Breast epithelium (tissue), 4 donors: ENCODE measurements at regions of chr18 and their contacts with region 1.

Region 1: GRCh38 chr18:61076986-61077385 is 256.2 kb upstream of the CDH20 start:
- DNase-seq: no peak
- H3K4me3 ChIP-seq: no peak overlapping the region
- H3K27ac ChIP-seq: no peak overlapping the region
- H3K4me1 ChIP-seq: no peaks in the 10 kb centered on the region
- H3K27me3 ChIP-seq: no peaks in the 10 kb centered on the region
- CTCF ChIP-seq: no peak
- POLR2A ChIP-seq: no peak

Region 2: DNA sequence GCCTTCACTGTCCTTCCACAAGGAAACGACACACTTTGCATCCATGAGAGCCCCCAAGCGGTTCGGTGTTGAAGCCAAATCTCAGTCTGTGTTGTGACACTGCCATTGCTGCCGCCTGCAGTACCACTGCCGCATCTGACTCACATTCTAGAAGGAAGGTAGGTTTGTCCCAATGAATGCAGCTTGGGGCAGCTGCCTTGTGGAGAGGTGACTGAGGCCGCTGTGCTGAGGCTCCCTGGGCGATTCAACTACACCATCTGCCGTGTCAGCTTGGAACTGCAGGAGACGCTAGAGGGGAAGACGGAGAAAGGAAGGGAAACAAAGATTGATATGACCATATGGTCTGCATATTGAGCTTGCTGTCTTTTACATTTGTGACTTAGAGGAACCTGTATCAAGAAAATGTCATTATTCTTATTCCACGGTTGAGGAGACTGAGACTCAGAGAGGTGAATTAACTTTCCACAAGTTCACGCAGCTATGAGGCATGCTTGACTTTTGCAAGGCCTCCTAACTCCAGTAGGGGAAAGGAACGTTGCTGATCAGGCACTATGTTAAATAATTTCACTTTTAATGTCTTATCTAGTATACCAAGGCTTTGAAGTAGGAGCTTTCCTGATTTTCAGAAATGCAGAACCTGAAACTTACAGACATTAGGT is 1674.4 kb before region 1 on chr18:
- intact Hi-C with region 1: no loop called
- DNase-seq: peak; percentile 59 to 69
- H3K4me3 ChIP-seq: no peak overlapping the region
- H3K27ac ChIP-seq: no peak overlapping the region
- H3K4me1 ChIP-seq: no peaks in the 10 kb centered on the region
- H3K27me3 ChIP-seq: no peaks in the 10 kb centered on the region
- CTCF ChIP-seq: peak in 2 of 3 donors; percentile 82 to 85
- POLR2A ChIP-seq: no peak

Region 3: GRCh38 chr18:61093965-61094364 is 17.0 kb after region 1 on chr18:
- intact Hi-C with region 1: no loop called
- DNase-seq: no peak
- H3K4me3 ChIP-seq: no peak overlapping the region
- H3K27ac ChIP-seq: no peak overlapping the region
- H3K4me1 ChIP-seq: no peaks in the 10 kb centered on the region
- H3K27me3 ChIP-seq: peaks cover 0 to 5% of the 10 kb centered on the region in 2 donors
- CTCF ChIP-seq: no peak
- POLR2A ChIP-seq: no peak

Region 4: DNA sequence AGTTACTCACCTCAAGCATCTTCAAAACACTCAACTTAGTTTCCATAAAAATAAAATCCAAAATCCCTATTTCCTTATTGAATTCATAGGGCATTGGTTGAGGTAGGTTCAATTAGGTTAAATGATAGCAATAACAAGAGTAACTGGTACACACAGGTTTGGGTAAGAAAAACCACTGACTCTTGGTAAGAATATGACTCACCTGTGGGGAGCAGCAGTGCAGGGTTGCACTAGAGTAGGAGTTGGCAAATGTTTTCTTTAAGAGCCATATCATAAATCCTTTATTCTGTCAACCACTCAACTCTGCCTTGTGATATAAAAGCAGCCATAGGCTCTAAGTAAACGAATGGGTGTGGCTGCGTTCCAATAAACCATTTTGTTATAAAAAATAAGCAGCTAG is 184.9 kb after region 1 on chr18:
- intact Hi-C with region 1: loop called (anchors 5 kb)
- DNase-seq: no peak
- H3K4me3 ChIP-seq: no peak overlapping the region
- H3K27ac ChIP-seq: no peak overlapping the region
- H3K4me1 ChIP-seq: no peaks in the 10 kb centered on the region
- H3K27me3 ChIP-seq: no peaks in the 10 kb centered on the region
- CTCF ChIP-seq: no peak
- POLR2A ChIP-seq: no peak

Region 5: GRCh38 chr18:61980355-61980754 is 903.4 kb after region 1 on chr18:
- intact Hi-C with region 1: loop called (anchors 5 kb)
- DNase-seq: no peak
- H3K4me3 ChIP-seq: no peak overlapping the region
- H3K27ac ChIP-seq: no peak overlapping the region
- H3K4me1 ChIP-seq: no peaks in the 10 kb centered on the region
- H3K27me3 ChIP-seq: no peaks in the 10 kb centered on the region
- CTCF ChIP-seq: no peak
- POLR2A ChIP-seq: no peak